ENCODE measurements at regions of chr19 and their contacts with region 1.

Region 1: DNA sequence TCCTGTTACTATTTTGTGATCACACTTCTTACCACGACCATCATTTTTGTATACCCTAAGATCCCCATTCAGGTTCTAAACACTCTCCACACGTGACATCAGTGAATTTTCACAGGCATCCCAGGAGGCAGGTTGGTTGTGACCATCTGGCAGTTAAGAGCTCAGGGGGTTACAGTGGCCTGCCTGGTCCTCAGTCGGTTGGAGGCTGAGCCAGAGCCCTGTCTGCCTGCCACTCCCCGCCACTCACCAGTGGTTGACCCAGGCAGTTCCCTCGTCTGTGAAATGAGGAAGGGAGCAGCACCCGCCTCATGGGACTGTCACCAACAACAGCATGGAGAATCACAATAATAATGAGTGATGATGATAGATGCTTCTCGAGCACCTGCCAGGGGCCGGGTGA is 36.4 kb upstream of the EHD2 start:
- DNase-seq: no peak
- CTCF ChIP-seq: no peak

Region 2: DNA sequence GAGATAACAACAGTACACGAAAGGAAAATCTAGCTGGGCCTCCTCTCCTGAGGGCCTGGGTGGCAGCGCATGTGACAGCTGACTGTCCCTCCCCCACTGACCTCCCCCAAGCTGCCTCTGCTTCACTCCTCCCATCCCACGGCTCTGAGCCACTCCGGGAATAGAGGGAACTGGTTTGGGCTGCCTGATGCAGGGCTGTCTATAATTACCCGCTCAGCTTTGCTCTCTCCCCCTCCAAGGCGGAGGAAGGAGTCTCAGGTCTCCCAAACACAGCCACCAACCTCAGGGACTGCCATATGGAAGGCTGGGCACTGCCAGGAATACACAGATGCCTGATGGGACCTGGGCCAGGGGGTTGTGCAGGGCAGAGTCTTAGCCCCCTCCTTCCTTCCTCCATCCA is 169.8 kb before region 1 on chr19:
- CTCF ChIA-PET with region 1: no interaction called
- POLR2A ChIA-PET with region 1: interaction called, 10 read pairs
- DNase-seq: no peak
- CTCF ChIP-seq: no peak

Region 3: DNA sequence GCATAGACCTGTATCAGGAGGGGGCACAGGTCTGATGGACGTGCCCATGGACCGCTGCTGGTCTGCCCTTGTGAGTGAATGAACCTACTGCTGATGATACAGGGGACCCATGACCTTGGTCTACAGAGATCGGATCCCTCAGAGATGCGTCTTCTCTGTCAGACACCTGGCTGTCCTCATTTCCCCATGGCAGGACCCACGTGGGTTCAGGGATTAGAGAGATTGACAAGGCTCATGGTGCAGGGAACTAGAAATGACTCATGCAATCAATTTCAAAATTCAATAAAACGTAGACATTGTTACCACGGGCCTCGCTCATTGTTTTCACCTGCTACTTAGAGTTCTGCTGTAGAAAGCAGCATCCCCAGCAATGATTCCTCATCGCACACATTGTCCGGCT is 128.5 kb after region 1 on chr19:
- CTCF ChIA-PET with region 1: no interaction called
- POLR2A ChIA-PET with region 1: no interaction called
- DNase-seq: no peak
- CTCF ChIP-seq: no peak